Natural killer cell (primary cell): ENCODE measurements at regions of chr10 and their contacts with region 1.

Region 1: DNA sequence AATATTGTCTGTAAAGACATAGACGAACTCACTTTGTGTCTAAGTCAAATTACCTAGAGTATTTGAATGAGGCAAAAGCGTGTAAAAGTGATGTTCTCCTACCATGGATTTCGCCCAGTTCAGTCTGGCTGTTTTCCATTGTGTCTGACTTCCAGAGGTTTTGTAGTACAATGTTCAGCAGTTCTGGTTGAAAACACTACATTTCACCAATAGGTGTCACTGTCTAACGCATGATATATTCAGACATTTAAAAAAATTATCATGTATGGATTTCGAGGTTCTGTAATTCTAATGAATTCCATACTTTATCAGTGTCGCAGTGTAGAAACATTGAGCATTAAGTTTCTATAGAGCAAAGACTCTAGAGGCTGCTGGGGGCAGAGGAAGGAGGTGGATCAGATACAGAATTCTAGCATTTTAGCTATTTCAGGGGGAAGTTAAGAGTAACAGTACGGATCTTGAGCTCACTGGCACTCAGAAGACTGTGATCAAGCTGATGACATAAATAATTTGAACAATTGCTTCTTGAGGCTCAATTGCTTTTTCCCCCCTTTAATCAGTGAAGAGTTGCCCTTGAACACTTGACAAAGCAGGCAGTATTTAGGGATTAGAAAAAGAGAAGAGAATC is 196.9 kb upstream of the RHOBTB1 start:
- DNase-seq: peak in 1 of 2 donors; percentile 41
- ATAC-seq: peak in 1 of 3 donors; percentile 53
- H3K4me3 ChIP-seq: no peak overlapping the region
- H3K4me3 Mint-ChIP-seq: no peak overlapping the region
- H3K27ac ChIP-seq: no peak overlapping the region
- H3K27ac Mint-ChIP-seq: no peak overlapping the region
- H3K4me1 ChIP-seq: no peaks in the 10 kb centered on the region
- H3K4me1 Mint-ChIP-seq: no peaks in the 10 kb centered on the region
- H3K27me3 ChIP-seq: no peaks in the 10 kb centered on the region
- H3K27me3 Mint-ChIP-seq: peaks cover 6% of the 10 kb centered on the region in 2 donors
- CTCF ChIP-seq: peak; percentile 70

Region 2: DNA sequence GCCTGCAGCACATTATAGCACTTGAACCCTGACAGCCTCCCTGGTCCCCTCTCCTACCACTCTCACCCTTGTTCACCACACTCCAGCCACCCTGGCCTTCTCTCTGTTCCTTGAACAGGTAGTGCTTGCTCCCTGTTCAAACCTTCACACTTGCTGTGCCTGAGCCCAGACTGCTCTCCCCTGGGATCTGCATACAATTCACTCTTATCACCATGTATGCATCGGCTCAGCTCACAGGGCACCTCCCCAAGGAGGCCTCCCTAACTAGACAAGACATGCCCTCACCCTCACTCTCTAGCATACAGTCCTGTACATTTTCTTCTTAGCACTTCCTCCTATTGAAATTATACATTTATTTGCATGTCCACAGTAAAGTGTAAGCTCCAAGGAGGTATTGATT is 1837.9 kb before region 1 on chr10:
- intact Hi-C with region 1: no loop called
- DNase-seq: no peak
- ATAC-seq: no peak
- H3K4me3 ChIP-seq: no peak overlapping the region
- H3K4me3 Mint-ChIP-seq: no peak overlapping the region
- H3K27ac ChIP-seq: no peak overlapping the region
- H3K27ac Mint-ChIP-seq: no peak overlapping the region
- H3K4me1 ChIP-seq: no peaks in the 10 kb centered on the region
- H3K4me1 Mint-ChIP-seq: no peaks in the 10 kb centered on the region
- H3K27me3 ChIP-seq: no peaks in the 10 kb centered on the region
- H3K27me3 Mint-ChIP-seq: no peaks in the 10 kb centered on the region
- CTCF ChIP-seq: no peak

Region 3: DNA sequence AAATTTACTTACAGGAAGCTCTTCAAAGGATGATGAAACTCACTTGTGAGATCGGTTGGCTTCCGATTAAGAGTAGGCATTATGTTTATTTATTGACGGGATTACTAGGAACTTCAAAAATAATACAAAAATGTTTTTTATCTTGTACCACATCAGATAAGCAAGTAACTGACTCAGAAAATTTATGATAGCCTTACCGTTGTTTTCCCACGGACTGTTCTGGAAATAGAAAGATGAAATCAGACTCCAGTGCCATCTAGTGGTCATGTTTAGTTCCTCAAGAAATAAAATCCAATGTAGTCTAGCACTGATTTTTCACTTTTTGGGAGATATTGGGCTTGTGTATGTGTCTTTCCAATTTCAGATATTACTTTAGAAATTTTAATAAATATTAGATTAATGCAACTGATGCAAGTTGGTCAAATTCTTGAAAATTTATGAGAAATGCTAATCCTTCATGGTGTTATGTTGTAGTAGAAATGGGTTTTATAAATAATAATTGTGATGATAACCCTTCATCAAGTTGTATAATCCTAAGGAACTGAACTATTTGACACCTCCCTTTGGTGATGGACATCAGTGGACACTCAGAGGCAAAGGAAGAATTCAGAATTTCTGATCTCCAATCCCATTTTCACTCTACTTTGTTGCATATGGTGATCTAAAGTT is 143.5 kb after region 1 on chr10:
- intact Hi-C with region 1: loop called (anchors 2 kb)
- DNase-seq: peak in 1 of 2 donors; percentile 67
- ATAC-seq: peak in 2 of 3 donors; percentile 37 to 50
- H3K4me3 ChIP-seq: no peak overlapping the region
- H3K4me3 Mint-ChIP-seq: peak overlapping the region; percentile 60
- H3K27ac ChIP-seq: no peak overlapping the region
- H3K27ac Mint-ChIP-seq: peak overlapping the region in 1 of 2 donors; percentile 57
- H3K4me1 ChIP-seq: peaks cover 4% of the 10 kb centered on the region
- H3K4me1 Mint-ChIP-seq: peaks cover 31 to 41% of the 10 kb centered on the region in 2 donors
- H3K27me3 ChIP-seq: no peaks in the 10 kb centered on the region
- H3K27me3 Mint-ChIP-seq: no peaks in the 10 kb centered on the region
- CTCF ChIP-seq: peak; percentile 88

Region 4: GRCh38 chr10:61733358-61733940 is 592.6 kb after region 1 on chr10:
- intact Hi-C with region 1: loop called (anchors 2 kb)
- DNase-seq: peak in 1 of 2 donors; percentile 40
- ATAC-seq: peak in 1 of 3 donors; percentile 53
- H3K4me3 ChIP-seq: no peak overlapping the region
- H3K4me3 Mint-ChIP-seq: no peak overlapping the region
- H3K27ac ChIP-seq: no peak overlapping the region
- H3K27ac Mint-ChIP-seq: no peak overlapping the region
- H3K4me1 ChIP-seq: no peaks in the 10 kb centered on the region
- H3K4me1 Mint-ChIP-seq: peaks cover 15 to 16% of the 10 kb centered on the region in 2 donors
- H3K27me3 ChIP-seq: peaks cover 2% of the 10 kb centered on the region
- H3K27me3 Mint-ChIP-seq: peaks cover 18 to 31% of the 10 kb centered on the region in 2 donors
- CTCF ChIP-seq: peak; percentile 57

Region 5: DNA sequence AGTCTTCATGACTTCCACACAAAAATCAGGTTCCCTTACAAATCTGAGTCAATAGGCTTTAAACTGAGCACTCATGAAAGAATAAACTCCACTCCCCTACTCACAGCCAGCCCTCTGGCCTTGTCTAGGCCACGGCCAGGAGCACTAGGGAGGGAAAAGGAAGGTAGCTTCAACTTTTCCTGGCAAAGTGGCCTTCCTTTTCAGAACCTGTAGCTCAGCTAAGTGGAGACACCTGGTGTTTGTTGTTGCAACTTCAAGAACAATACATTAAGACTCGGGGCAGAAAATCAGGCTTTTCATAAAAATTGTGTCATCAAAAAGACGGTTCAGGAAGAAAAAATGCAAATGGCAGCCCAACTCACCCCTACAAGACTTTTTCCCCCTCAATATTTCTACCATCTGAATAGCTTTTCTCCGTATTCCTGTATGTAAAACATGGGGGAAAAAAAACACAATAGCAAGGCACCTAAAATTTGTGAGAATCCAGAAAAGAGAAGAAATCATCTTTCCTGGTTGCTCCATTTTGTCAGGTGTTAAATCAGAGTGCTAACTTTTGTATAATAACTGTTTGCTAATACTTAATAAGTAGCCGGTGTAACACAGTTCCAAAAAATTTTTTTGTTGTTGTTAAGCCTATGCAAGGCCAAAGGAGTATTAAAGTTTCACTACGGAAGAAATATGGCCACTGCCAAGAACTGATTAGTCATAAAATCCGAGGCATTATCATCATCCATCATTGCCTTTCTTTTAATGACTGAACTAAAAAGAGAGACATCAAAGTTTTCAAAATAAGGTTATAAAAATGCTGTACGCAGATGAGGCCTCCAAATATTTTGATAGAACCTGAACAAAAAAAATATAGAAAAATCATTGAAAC is 694.4 kb after region 1 on chr10:
- intact Hi-C with region 1: loop called (anchors 2 kb)
- DNase-seq: peak in 1 of 2 donors; percentile 47
- ATAC-seq: peak in 1 of 3 donors; percentile 37
- H3K4me3 ChIP-seq: no peak overlapping the region
- H3K4me3 Mint-ChIP-seq: no peak overlapping the region
- H3K27ac ChIP-seq: no peak overlapping the region
- H3K27ac Mint-ChIP-seq: no peak overlapping the region
- H3K4me1 ChIP-seq: no peaks in the 10 kb centered on the region
- H3K4me1 Mint-ChIP-seq: no peaks in the 10 kb centered on the region
- H3K27me3 ChIP-seq: no peaks in the 10 kb centered on the region
- H3K27me3 Mint-ChIP-seq: no peaks in the 10 kb centered on the region
- CTCF ChIP-seq: no peak